ENCODE measurements at regions of chr1 and their contacts with region 1.

Region 1: GRCh38 chr1:93909146-93910050 is at the start of gene GCLM:
- DNase-seq: peak; percentile 40
- ATAC-seq: peak; percentile 93
- H3K4me3 ChIP-seq: peak within 1 kb of the TSS; percentile 74
- H3K27ac ChIP-seq: peak within 1 kb of the TSS; percentile 42; the same call in 1 of the 2 replicates
- H3K4me1 ChIP-seq: no peaks in the 10 kb centered on the region; the same call in 1 of the 2 replicates
- H3K27me3 ChIP-seq: no peaks in the 10 kb centered on the region
- CTCF ChIP-seq: peak; percentile 70 to 98 (median 79); a peak in 5 of 6 replicates
- EP300 ChIP-seq: no peak
- POLR2A ChIP-seq: peak; percentile 61
- RAD21 ChIP-seq: 0 out of 2 replicates have a peak, but pooled peaks have one; percentile 20
- polyA plus RNA-seq, gene GCLM: 3.6 to 5.0 TPM

Region 2: GRCh38 chr1:93878889-93879586 is 30.4 kb before region 1 on chr1 and contains the start of gene DNTTIP2:
- CTCF ChIA-PET with region 1: interaction called, 3 read pairs
- POLR2A ChIA-PET with region 1: interaction called, 3 read pairs
- RAD21 ChIA-PET with region 1: interaction called, 4 read pairs
- SMC1A ChIA-PET with region 1: interaction called, 5 read pairs
- in situ Hi-C with region 1: no loop called
- intact Hi-C with region 1: loop called (anchors 1 kb)
- DNase-seq: peak; percentile 69
- ATAC-seq: peak; percentile 97
- H3K4me3 ChIP-seq: peak within 1 kb of the TSS; percentile 95
- H3K27ac ChIP-seq: peak within 1 kb of the TSS; percentile 94
- H3K4me1 ChIP-seq: peaks cover 9% of the 10 kb centered on the region; the same call in 1 of the 2 replicates
- H3K27me3 ChIP-seq: no peaks in the 10 kb centered on the region
- CTCF ChIP-seq: no peak
- EP300 ChIP-seq: no peak
- POLR2A ChIP-seq: peak; percentile 99
- RAD21 ChIP-seq: no peak
- polyA plus RNA-seq, gene DNTTIP2: 79.0 to 82.8 TPM

Region 3: DNA sequence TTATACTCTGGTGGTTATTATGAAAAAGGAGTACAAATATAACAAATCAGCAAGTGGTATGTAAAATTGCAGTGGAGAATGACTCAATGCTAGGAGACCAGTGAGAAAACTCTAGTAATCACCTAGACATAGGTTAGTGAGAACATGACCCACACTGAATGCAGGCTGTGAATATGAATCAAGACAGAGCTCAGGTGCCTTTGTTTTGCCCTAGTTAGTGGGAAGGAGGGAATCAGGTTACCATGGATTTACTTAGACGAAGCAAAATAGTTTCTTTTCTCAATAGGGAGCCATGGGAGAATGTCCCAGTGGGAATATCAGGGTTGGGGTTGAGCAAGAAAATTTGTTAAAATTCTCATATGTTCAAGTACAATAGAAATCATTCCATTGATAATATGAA is 10.4 kb after region 1 on chr1:
- CTCF ChIA-PET with region 1: interaction called, 12 read pairs
- POLR2A ChIA-PET with region 1: interaction called, 4 read pairs
- RAD21 ChIA-PET with region 1: no interaction called
- SMC1A ChIA-PET with region 1: no interaction called
- in situ Hi-C with region 1: no loop called
- intact Hi-C with region 1: no loop called
- DNase-seq: no peak
- ATAC-seq: no peak
- H3K4me3 ChIP-seq: no peak overlapping the region
- H3K27ac ChIP-seq: no peak overlapping the region
- H3K4me1 ChIP-seq: no peaks in the 10 kb centered on the region
- H3K27me3 ChIP-seq: no peaks in the 10 kb centered on the region; a peak in 1 of 4 replicates
- CTCF ChIP-seq: no peak
- EP300 ChIP-seq: no peak
- POLR2A ChIP-seq: no peak
- RAD21 ChIP-seq: no peak